ENCODE measurements at regions of chr22 and their contacts with region 1.

Region 1: GRCh38 chr22:41697126-41697775 is 2.1 kb upstream of the MEI1 start:
- DNase-seq: peak; percentile 87
- H3K4me3 ChIP-seq: no peak overlapping the region
- H3K27ac ChIP-seq: no peak overlapping the region
- H3K4me1 ChIP-seq: peaks cover 3% of the 10 kb centered on the region
- H3K27me3 ChIP-seq: no peaks in the 10 kb centered on the region
- CTCF ChIP-seq: peak; percentile 98 to 99
- POLR2A ChIP-seq: no peak

Region 2: DNA sequence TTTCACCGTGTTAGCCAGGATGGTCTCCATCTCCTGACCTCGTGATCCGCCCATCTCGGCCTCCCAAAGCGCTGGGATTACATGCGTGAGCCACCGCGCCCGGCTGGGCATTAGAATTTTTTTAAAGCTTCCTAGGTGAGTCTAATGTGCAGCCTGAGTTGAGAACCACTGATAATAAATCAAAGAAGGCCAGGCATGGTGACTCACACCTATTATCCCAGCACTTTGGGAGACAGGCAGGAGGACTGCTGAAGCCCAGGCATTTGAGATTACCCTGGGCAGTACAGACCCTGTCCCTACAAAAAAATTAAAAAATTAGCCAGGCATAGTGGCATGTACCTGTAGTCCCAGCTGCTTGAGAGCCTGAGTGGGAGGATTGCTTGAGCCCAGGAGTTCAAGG is 15.8 kb after region 1 on chr22:
- CTCF ChIA-PET with region 1: interaction called, 25 read pairs
- POLR2A ChIA-PET with region 1: no interaction called
- dilution Hi-C with region 1: no loop called
- intact Hi-C with region 1: no loop called
- DNase-seq: no peak
- H3K4me3 ChIP-seq: no peak overlapping the region
- H3K27ac ChIP-seq: no peak overlapping the region
- H3K4me1 ChIP-seq: no peaks in the 10 kb centered on the region
- H3K27me3 ChIP-seq: peaks cover 7 to 12% of the 10 kb centered on the region in 2 experiments
- CTCF ChIP-seq: no peak
- POLR2A ChIP-seq: no peak

Region 3: GRCh38 chr22:41746567-41747400 is 49.5 kb after region 1 on chr22:
- CTCF ChIA-PET with region 1: interaction called, 39 read pairs
- POLR2A ChIA-PET with region 1: no interaction called
- dilution Hi-C with region 1: no loop called
- intact Hi-C with region 1: loop called (anchors 1 kb)
- DNase-seq: peak; percentile 79
- H3K4me3 ChIP-seq: no peak overlapping the region
- H3K27ac ChIP-seq: no peak overlapping the region
- H3K4me1 ChIP-seq: no peaks in the 10 kb centered on the region
- H3K27me3 ChIP-seq: peaks cover 16 to 19% of the 10 kb centered on the region in 2 experiments
- CTCF ChIP-seq: peak; percentile 83 to 89
- POLR2A ChIP-seq: no peak

Region 4: DNA sequence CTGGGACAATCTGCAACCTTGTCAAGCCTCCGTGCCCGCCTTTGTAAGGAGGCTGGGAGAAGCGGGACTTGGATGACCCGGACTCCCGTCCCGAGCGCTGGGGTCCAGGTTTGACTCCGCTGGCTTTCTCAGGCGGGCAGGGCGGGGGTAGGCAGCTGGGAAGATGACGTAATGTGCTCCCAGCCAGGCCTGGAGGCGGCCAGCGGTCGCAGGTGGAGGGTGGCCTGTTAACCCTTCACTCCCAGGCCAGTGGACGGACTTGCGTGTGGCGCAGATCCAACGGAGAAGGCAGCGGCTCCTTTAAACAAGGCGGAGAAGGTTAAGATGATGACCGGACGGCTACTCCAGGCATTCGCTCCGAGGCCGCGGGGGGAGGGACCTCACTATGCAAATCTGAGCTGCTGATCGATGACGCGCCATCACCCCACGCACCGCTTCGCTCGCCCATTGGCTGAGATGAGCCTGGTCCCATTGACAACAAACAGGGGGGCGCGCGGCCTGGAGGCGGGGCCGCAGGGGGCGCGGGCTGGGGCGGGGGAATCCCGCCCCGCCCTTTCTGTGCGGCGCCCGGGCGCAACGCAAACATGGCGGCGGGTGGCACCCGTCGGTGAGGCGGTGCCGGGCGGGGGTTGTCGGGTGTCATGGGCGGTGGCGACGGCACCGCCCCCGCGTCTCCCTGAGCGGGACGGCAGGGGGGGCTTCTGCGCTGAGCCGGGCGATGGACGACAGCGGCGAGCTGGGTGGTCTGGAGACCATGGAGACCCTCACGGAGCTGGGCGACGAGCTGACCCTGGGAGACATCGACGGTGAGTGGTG is 135.5 kb after region 1 on chr22 and contains the start of gene SREBF2:
- CTCF ChIA-PET with region 1: interaction called, 8 read pairs
- POLR2A ChIA-PET with region 1: no interaction called
- dilution Hi-C with region 1: no loop called
- intact Hi-C with region 1: loop called (anchors 2 kb)
- DNase-seq: peak; percentile 100
- H3K4me3 ChIP-seq: peak within 1 kb of the TSS; percentile 59 to 81 (median 75)
- H3K27ac ChIP-seq: peak within 1 kb of the TSS; percentile 73
- H3K4me1 ChIP-seq: peaks cover 16% of the 10 kb centered on the region
- H3K27me3 ChIP-seq: no peaks in the 10 kb centered on the region
- CTCF ChIP-seq: no peak
- POLR2A ChIP-seq: peak; percentile 68
- total RNA-seq, gene SREBF2: 136 and 144 TPM in 2 replicates

Region 5: DNA sequence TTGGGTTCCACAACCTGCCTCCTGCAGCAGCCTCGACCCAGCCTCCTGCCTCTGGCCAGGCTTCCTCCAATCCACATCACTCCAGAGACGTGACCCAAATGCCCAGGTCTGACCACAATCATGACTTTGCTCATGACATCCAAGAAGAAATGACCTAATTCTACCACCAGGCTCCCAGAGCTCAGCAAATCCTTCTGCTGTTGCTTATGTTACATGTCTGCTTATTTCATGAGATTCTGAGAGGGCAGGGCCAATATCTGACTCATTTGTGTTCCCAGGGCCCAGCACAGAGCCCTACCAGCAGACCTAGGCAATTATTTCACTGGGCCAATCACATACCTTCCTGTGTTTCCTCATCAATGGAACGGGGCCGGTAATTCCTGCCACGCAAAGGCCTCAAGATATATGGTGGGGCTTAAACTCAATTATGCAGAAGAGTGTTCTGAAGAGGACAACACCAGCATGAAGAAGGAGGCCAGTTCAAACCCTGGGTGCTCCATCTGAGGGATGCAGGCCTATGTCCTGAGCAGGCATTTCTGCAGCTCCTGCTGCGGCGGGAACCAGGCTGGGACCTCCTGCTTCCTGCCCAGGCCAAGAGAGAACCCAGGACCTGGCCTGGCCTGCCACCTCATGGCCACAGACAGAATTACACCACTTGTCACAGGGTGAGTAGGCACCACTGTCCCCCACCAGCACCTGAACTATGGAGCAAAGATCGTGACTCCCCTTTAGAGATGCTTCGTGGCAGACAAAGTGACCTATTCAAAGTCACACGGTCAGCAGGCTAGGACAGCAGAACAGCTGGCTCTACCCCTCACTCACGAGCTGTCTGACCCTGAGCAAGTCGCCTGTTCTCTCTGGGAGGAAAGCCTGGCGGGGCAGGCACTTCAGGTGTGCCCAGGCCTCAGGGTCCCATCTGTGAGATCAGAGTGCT is 243.8 kb after region 1 on chr22:
- CTCF ChIA-PET with region 1: interaction called, 127 read pairs
- POLR2A ChIA-PET with region 1: interaction called, 3 read pairs
- dilution Hi-C with region 1: no loop called
- intact Hi-C with region 1: loop called (anchors 1 kb)
- DNase-seq: peak; percentile 75
- H3K4me3 ChIP-seq: no peak overlapping the region
- H3K27ac ChIP-seq: no peak overlapping the region
- H3K4me1 ChIP-seq: peaks cover 29% of the 10 kb centered on the region
- H3K27me3 ChIP-seq: no peaks in the 10 kb centered on the region
- CTCF ChIP-seq: peak; percentile 83 to 89
- POLR2A ChIP-seq: no peak

Region 6: DNA sequence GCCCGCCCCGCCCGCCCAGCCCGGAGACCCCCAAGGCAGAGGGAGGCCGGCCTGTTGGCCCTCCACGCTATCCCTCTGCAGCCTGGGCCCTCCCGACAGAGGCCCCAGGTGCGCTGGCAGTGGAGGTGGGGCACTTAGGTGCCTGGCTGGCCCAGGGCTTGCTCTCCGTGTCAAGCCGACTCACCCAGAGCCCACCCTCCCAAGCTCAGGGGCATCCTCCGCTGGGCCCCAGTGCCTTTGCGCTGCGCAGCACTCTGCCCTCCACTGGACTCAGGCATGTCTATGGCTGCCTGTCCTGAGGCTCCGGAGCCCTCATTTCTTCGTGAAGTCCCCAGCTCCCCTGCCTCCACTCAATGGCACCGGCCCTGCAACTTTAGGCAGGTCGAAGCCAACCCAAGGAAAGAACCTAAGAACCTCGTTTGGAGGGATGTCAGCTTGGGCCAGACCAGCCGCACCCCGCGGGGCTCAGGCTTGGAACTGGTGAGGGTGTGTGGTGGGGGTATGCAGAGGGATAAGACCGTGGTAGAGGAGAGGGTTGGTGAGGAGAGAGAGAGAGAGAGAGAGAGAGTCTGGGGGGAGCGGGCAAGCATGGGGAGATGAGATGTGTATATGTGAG is 260.8 kb after region 1 on chr22:
- CTCF ChIA-PET with region 1: interaction called, 23 read pairs
- POLR2A ChIA-PET with region 1: no interaction called
- dilution Hi-C with region 1: no loop called
- intact Hi-C with region 1: no loop called
- DNase-seq: no peak
- H3K4me3 ChIP-seq: no peak overlapping the region
- H3K27ac ChIP-seq: no peak overlapping the region
- H3K4me1 ChIP-seq: no peaks in the 10 kb centered on the region
- H3K27me3 ChIP-seq: no peaks in the 10 kb centered on the region
- CTCF ChIP-seq: no peak
- POLR2A ChIP-seq: no peak

Measured in endothelial cell of umbilical vein (primary cell).